Heart right ventricle (tissue), 16 donors: ENCODE measurements at regions of chr15 and their contacts with region 1.

Region 1: DNA sequence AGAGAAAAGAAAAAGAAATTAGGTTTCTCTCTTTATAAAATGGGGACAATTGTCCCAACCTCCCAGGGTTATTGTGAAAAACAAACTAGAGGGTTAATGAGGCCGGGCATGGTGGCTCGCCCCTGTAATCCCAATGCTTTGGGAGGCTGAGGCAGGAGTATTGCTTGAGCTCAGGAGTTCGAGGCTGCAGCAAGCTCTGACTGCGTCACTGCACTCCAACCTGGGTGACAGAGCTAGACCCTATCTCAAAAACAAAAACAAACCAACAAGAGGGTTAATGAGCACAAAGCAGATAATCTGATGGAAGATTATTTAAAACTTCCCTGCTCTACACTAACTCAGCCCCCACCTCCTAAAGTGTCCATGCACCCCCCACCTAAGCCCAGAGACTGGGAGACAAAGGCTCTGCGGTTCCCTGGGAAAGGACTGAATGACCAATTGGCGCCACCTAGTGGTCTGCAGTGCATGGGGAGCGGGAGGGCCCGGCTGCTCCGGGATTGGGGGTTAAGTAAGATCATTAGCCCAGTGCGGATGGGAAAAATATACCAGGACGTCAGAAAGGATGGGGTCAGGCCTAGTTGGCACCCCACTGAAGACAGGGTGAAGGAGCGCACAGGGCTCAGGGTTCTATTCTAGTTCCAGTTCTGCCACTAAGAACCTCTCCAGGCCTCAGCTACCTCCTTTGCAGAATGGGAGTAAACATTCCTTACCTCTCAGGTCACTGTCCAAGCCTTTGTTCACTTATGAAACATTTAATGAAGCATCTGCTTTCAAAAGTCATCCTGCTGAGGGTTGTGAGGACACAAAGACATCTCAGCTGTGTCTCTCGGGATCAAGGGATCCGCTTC is 15.6 kb downstream of the PIF1 start:
- DNase-seq: peak; percentile 85 to 89
- ATAC-seq: peak; percentile 68 to 90 (median 86)
- H3K4me3 ChIP-seq: no peak overlapping the region
- H3K27ac ChIP-seq: no peak overlapping the region
- H3K4me1 ChIP-seq: peaks cover 0 to 18% (median 5%) of the 10 kb centered on the region in 9 donors
- H3K27me3 ChIP-seq: peaks cover 0 to 5% (median 0%) of the 10 kb centered on the region in 7 donors
- CTCF ChIP-seq: peak; percentile 80 to 94 (median 92)

Region 2: DNA sequence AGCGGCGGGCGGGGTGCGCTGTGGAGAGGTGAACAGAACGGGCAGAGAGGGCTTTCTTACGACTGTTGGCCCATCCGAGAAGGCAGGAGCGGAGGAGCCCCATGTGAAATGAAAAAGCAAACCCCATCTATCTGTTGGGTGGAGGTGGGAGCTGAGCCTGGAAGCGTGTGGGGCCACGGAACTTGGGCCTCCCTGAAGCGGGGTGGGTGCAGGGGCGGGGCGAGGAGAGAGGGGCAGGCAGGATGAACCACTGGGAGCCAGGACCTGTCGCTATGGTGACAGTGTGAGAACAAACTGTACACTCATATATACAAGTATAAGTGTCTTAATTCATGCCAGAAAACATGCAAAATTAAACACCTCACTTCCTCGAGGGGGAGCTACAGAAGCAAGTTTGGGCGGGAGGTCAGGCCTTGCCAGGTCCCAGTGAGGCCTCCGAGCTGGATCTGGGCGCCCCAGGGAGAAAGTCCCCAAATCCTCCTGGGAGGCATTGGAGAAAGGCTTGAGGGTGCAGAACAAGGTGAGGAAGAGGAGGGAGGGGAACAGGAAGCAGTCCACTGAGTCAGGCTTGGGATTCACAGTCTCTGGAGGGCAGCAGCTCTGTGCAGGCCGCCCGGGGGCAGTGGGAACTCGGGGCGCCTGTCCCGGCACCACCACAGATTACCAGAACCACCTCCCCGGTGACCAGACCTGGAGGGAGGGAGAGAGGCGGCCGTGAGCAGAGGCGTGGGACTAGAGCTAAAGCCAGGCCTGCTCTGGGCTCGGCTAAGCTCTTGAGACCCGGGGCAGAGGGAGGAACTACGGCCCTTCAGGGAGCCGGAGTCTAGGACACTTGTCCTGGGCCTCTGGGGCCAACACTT is 69.3 kb before region 1 on chr15:
- intact Hi-C with region 1: loop called in 4 of 10 experiments (anchors 1 to 5 kb)
- DNase-seq: peak; percentile 67 to 73
- ATAC-seq: peak; percentile 58 to 95 (median 84)
- H3K4me3 ChIP-seq: peak overlapping the region in 3 of 10 donors; percentile 7 to 25 (median 14)
- H3K27ac ChIP-seq: peak overlapping the region in 9 of 10 donors; percentile 56 to 77 (median 61)
- H3K4me1 ChIP-seq: peaks cover 12 to 57% (median 38%) of the 10 kb centered on the region in 9 donors
- H3K27me3 ChIP-seq: no peaks in the 10 kb centered on the region
- CTCF ChIP-seq: peak in 7 of 9 donors; percentile 20 to 61 (median 46)